Activated CD4-positive, alpha-beta T cell treated with anti-CD3 and anti-CD28 coated beads, Interleukin-2, amount 10 ng/mL, durations not matched to agents 24 days and 14 days (primary cell): ENCODE measurements at regions of chr6 and their contacts with region 1.

Region 1: GRCh38 chr6:53171605-53172446 is 23.2 kb upstream of the GCM1 start:
- DNase-seq: peak; percentile 97
- H3K4me3 Mint-ChIP-seq: no peak overlapping the region
- H3K27ac Mint-ChIP-seq: no peak overlapping the region
- H3K4me1 Mint-ChIP-seq: no peaks in the 10 kb centered on the region
- H3K27me3 Mint-ChIP-seq: peaks cover 4% of the 10 kb centered on the region

Region 2: GRCh38 chr6:52937908-52938307 is 233.9 kb before region 1 on chr6:
- intact Hi-C with region 1: no loop called
- DNase-seq: no peak
- H3K4me3 Mint-ChIP-seq: no peak overlapping the region
- H3K27ac Mint-ChIP-seq: no peak overlapping the region
- H3K4me1 Mint-ChIP-seq: no peaks in the 10 kb centered on the region
- H3K27me3 Mint-ChIP-seq: peaks cover 4% of the 10 kb centered on the region

Region 3: GRCh38 chr6:53348371-53349208 is 176.8 kb after region 1 on chr6 and contains the start of gene ELOVL5:
- intact Hi-C with region 1: loop called (anchors 5 kb)
- DNase-seq: peak; percentile 99
- H3K4me3 Mint-ChIP-seq: peak within 1 kb of the TSS; percentile 93
- H3K27ac Mint-ChIP-seq: peak within 1 kb of the TSS; percentile 92
- H3K4me1 Mint-ChIP-seq: peaks cover 40% of the 10 kb centered on the region
- H3K27me3 Mint-ChIP-seq: peaks cover 19% of the 10 kb centered on the region
- total RNA-seq, gene ELOVL5: 122 and 126 TPM in 2 replicates

Region 4: GRCh38 chr6:53410508-53411258 is 238.9 kb after region 1 on chr6:
- intact Hi-C with region 1: loop called (anchors 1 kb)
- DNase-seq: peak; percentile 85
- H3K4me3 Mint-ChIP-seq: no peak overlapping the region
- H3K27ac Mint-ChIP-seq: no peak overlapping the region
- H3K4me1 Mint-ChIP-seq: no peaks in the 10 kb centered on the region
- H3K27me3 Mint-ChIP-seq: peaks cover 3% of the 10 kb centered on the region

Region 5: GRCh38 chr6:53437557-53438202 is 265.9 kb after region 1 on chr6:
- intact Hi-C with region 1: loop called (anchors 1 kb)
- DNase-seq: peak; percentile 65
- H3K4me3 Mint-ChIP-seq: no peak overlapping the region
- H3K27ac Mint-ChIP-seq: no peak overlapping the region
- H3K4me1 Mint-ChIP-seq: peaks cover 10% of the 10 kb centered on the region
- H3K27me3 Mint-ChIP-seq: peaks cover 3% of the 10 kb centered on the region

Region 6: GRCh38 chr6:53484476-53485280 is 312.9 kb after region 1 on chr6:
- intact Hi-C with region 1: loop called (anchors 1 kb)
- DNase-seq: peak; percentile 91
- H3K4me3 Mint-ChIP-seq: no peak overlapping the region
- H3K27ac Mint-ChIP-seq: no peak overlapping the region
- H3K4me1 Mint-ChIP-seq: peaks cover 18% of the 10 kb centered on the region
- H3K27me3 Mint-ChIP-seq: peaks cover 33% of the 10 kb centered on the region

Region 7: GRCh38 chr6:53651764-53652401 is 480.1 kb after region 1 on chr6:
- intact Hi-C with region 1: loop called (anchors 10 kb)
- DNase-seq: peak; percentile 92
- H3K4me3 Mint-ChIP-seq: peak overlapping the region; percentile 90
- H3K27ac Mint-ChIP-seq: peak overlapping the region; percentile 95
- H3K4me1 Mint-ChIP-seq: peaks cover 22% of the 10 kb centered on the region
- H3K27me3 Mint-ChIP-seq: peaks cover 23% of the 10 kb centered on the region

Region 8: GRCh38 chr6:53725791-53726431 is 554.1 kb after region 1 on chr6:
- intact Hi-C with region 1: loop called (anchors 5 kb)
- DNase-seq: peak; percentile 93
- H3K4me3 Mint-ChIP-seq: no peak overlapping the region
- H3K27ac Mint-ChIP-seq: no peak overlapping the region
- H3K4me1 Mint-ChIP-seq: peaks cover 8% of the 10 kb centered on the region
- H3K27me3 Mint-ChIP-seq: peaks cover 23% of the 10 kb centered on the region